CD4-positive, alpha-beta memory T cell (primary cell): ENCODE measurements at regions of chr2 and their contacts with region 1.

Region 1: DNA sequence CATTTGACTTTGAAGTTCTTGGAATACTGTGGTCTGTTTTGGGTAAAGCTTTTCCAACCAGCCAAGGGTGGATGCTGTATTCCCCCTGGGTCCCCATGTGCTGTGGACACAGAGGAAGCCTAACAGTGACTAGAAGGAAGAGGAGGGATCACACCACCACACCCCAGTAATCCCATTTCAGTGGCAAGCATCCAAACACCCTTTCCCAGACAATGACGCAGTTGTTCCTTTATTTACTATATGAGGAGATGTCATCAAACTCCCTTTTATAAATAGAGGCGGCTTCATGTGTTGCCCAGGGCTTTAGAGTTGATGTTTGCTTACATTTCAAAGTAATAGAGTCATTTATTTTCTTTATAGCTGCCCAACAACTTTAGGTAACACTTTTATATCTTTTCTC is 959.4 kb upstream of the GYPC start:
- DNase-seq: no peak
- H3K4me3 ChIP-seq: no peak overlapping the region
- H3K4me3 Mint-ChIP-seq: no peak overlapping the region
- H3K27ac ChIP-seq: no peak overlapping the region
- H3K27ac Mint-ChIP-seq: no peak overlapping the region
- H3K4me1 ChIP-seq: no peaks in the 10 kb centered on the region
- H3K4me1 Mint-ChIP-seq: no peaks in the 10 kb centered on the region
- H3K27me3 ChIP-seq: no peaks in the 10 kb centered on the region
- H3K27me3 Mint-ChIP-seq: no peaks in the 10 kb centered on the region

Region 2: DNA sequence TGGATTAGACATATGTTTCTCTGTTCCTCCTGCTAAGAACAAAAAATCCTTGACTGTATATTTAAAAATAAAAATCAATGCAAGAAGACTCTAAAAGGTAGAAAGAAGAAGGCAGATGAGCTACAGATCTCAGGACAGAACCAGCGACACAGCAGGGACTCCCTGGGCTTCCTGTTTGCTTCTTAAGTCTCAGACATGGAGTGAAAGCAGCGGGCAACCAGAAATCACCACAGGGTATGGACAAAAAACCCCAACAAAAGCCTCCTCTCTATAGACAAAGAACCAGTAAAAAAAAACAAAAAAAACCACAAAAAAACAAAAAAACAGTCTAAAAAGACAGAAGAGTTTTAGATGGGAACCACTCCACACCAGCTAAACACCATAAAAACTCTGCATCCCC is 11.6 kb before region 1 on chr2:
- CTCF ChIA-PET with region 1: interaction called, 6 read pairs
- POLR2A ChIA-PET with region 1: no interaction called
- intact Hi-C with region 1: loop called (anchors 1 kb)
- DNase-seq: no peak
- H3K4me3 ChIP-seq: no peak overlapping the region
- H3K4me3 Mint-ChIP-seq: no peak overlapping the region
- H3K27ac ChIP-seq: no peak overlapping the region
- H3K27ac Mint-ChIP-seq: no peak overlapping the region
- H3K4me1 ChIP-seq: no peaks in the 10 kb centered on the region
- H3K4me1 Mint-ChIP-seq: no peaks in the 10 kb centered on the region
- H3K27me3 ChIP-seq: no peaks in the 10 kb centered on the region
- H3K27me3 Mint-ChIP-seq: peaks cover 0 to 1% of the 10 kb centered on the region in 2 donors

Region 3: DNA sequence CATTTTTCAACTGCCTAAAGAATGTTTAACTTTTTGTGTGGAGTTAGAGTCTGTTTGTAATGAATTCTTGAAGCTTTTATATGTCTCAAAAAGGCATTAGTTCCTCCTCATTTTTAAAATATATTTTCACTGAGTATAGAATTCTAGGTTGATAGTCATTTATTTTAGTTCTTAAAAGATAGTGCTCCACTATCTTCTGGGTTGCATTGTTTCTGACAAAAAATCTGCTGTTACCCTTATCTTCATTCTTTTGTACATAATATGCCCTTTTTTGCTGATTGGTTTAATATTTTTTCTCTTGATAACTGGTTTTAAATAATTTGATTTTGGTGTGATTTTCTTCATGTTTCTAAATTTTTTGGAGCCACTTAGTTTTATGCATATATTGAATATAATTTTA is 204.7 kb after region 1 on chr2:
- CTCF ChIA-PET with region 1: no interaction called
- POLR2A ChIA-PET with region 1: no interaction called
- intact Hi-C with region 1: no loop called
- DNase-seq: no peak
- H3K4me3 ChIP-seq: no peak overlapping the region
- H3K4me3 Mint-ChIP-seq: no peak overlapping the region
- H3K27ac ChIP-seq: no peak overlapping the region
- H3K27ac Mint-ChIP-seq: no peak overlapping the region
- H3K4me1 ChIP-seq: no peaks in the 10 kb centered on the region
- H3K4me1 Mint-ChIP-seq: no peaks in the 10 kb centered on the region
- H3K27me3 ChIP-seq: no peaks in the 10 kb centered on the region
- H3K27me3 Mint-ChIP-seq: no peaks in the 10 kb centered on the region